Cardiac septum (tissue), 1 donor: ENCODE measurements at regions of chr6 and their contacts with region 1.

Region 1: GRCh38 chr6:35219683-35220326 is 6.0 kb downstream of the SCUBE3 start:
- DNase-seq: no peak

Region 2: GRCh38 chr6:35146453-35146852 is 73.4 kb before region 1 on chr6:
- intact Hi-C with region 1: loop called (anchors 5 kb)
- DNase-seq: no peak

Region 3: GRCh38 chr6:35663447-35664235 is 443.8 kb after region 1 on chr6:
- intact Hi-C with region 1: no loop called
- DNase-seq: no peak